PC-9 (cell line): ENCODE measurements at regions of chr7 and their contacts with region 1.

Region 1: DNA sequence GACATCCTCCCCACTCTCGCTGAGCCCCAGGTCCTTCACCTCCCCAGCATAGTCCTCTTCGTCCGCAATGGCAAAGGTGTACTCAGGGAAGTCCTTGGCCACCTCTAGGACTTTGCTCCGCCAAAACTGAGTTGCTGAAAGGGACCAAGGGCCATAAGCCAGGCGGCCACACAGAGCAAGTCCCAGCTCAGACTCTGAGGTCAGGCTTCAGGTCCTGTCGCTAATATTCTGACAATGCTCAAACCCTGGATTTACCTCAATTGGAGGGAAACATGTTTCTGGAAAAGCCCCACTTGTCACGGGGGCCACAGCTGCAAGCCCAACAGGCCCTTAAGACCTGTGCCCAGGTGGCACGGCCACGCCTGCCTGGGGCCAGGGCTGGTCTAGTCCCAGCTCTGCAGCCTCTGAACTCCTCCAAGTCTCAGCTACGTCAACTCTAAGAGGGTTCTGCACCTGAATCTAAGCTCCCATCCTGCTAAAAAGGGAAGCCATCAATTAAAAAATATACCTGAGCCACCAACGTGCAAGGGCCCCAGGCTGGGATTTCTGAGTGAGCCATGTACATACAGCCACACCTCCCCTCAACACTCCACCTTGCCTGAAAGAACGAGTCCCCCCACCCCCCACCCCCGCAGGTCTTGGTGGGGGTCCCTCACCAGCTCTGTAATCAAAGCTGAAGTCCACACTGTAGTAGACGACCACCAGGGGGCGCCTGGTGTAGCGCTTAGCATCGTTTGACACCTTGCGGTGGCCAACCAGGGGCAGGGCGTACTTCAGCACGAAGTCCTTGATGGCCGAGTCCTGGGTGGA is 22.9 kb downstream of the PDIA4 start:
- DNase-seq: peak in 1 of 2 experiments; percentile 37
- H3K4me3 ChIP-seq: no peak overlapping the region
- H3K27ac ChIP-seq: no peak overlapping the region
- H3K4me1 ChIP-seq: no peaks in the 10 kb centered on the region
- H3K27me3 ChIP-seq: no peaks in the 10 kb centered on the region
- CTCF ChIP-seq: peak; percentile 85

Region 2: DNA sequence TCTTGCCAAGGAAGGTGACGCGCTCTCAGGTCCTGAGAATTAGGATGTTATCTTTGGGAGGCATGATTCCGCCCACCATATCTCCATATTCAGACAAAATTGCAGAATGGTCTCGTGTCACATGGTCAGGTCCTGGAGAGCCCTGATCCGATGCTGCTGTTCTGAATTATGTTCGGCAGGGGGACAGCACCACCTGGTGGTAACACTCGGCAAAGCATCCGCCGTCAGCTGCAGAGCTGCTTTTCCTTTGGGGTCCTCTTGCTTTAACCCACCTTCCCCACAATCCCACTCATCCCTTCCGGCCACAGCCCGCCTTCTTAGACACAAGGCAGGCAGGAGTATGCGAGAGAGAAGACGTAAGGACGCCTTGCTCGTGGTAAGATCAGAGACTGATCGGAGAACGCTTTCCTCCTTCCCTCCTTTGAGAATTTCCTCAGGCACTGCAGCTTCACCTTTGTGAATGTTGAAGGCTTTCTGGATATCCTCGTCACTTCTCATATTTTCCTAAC is 742.7 kb before region 1 on chr7:
- CTCF ChIA-PET with region 1: interaction called, 10 read pairs
- POLR2A ChIA-PET with region 1: no interaction called
- intact Hi-C with region 1: no loop called
- DNase-seq: peak in 1 of 2 experiments; percentile 60
- H3K4me3 ChIP-seq: no peak overlapping the region
- H3K27ac ChIP-seq: no peak overlapping the region
- H3K4me1 ChIP-seq: no peaks in the 10 kb centered on the region
- H3K27me3 ChIP-seq: peaks cover 45% of the 10 kb centered on the region
- CTCF ChIP-seq: peak; percentile 95

Region 3: GRCh38 chr7:149140831-149141230 is 135.4 kb after region 1 on chr7:
- CTCF ChIA-PET with region 1: no interaction called
- POLR2A ChIA-PET with region 1: no interaction called
- intact Hi-C with region 1: no loop called
- DNase-seq: peak in 1 of 2 experiments; percentile 44
- H3K4me3 ChIP-seq: no peak overlapping the region
- H3K27ac ChIP-seq: no peak overlapping the region
- H3K4me1 ChIP-seq: peaks cover 42% of the 10 kb centered on the region
- H3K27me3 ChIP-seq: no peaks in the 10 kb centered on the region
- CTCF ChIP-seq: no peak